ENCODE measurements at regions of chr11 and their contacts with region 1.

Region 1: GRCh38 chr11:10899121-10899830 is 41.4 kb upstream of the ZBED5 start:
- DNase-seq: no peak
- ATAC-seq: peak; percentile 20; the same call in 1 of the 2 replicates
- H3K4me3 ChIP-seq: peak overlapping the region; percentile 18
- H3K27ac ChIP-seq: peak overlapping the region; percentile 99
- H3K4me1 ChIP-seq: peaks cover 45% of the 10 kb centered on the region
- H3K27me3 ChIP-seq: no peaks in the 10 kb centered on the region
- CTCF ChIP-seq: no peak

Region 2: DNA sequence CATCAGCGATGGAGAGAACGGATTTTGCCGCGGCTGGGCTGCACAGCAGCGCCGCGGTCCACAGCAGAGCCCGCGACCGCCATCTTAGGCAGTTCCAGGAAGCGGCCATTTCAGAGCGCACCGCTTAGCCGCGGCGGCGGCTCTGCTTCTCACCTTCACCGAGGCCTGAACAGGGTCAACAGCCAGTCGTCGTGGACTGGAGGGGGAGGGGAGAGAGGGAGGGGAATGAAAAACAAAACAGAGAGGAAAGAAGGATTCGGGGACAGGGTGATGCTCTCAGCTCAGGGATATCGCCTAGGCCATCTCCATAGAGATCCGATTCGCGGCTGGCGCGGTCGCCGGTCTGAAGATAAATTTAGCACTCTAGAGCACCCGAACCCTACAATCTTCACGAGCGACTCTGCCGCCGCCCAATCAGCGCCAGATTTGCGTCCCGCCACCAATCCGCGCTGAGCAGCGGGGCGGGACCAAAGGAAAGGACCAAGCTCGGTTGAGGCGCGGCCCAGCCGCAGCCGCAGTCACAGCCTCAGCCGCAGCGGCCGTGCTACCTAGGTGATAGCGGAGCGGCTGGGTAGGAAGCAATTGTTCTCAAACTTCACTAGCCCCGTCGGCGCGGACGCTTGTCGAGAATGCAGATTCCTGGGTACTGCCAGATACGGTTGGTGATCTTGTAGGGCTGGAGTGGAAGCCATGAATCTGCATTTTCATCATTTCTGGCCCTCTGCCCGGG is 41.4 kb before region 1 on chr11 and contains the start of gene ZBED5:
- CTCF ChIA-PET with region 1: interaction called, 3 read pairs
- POLR2A ChIA-PET with region 1: interaction called, 11 read pairs
- intact Hi-C with region 1: loop called (anchors 1 kb)
- DNase-seq: peak; percentile 97
- ATAC-seq: peak; percentile 93
- H3K4me3 ChIP-seq: peak within 1 kb of the TSS; percentile 76
- H3K27ac ChIP-seq: peak within 1 kb of the TSS; percentile 91
- H3K4me1 ChIP-seq: peaks cover 38% of the 10 kb centered on the region
- H3K27me3 ChIP-seq: no peaks in the 10 kb centered on the region
- CTCF ChIP-seq: no peak; the same call in 1 of the 2 replicates
- total RNA-seq, gene ZBED5: 19.5 and 21.0 TPM in 2 replicates

Region 3: DNA sequence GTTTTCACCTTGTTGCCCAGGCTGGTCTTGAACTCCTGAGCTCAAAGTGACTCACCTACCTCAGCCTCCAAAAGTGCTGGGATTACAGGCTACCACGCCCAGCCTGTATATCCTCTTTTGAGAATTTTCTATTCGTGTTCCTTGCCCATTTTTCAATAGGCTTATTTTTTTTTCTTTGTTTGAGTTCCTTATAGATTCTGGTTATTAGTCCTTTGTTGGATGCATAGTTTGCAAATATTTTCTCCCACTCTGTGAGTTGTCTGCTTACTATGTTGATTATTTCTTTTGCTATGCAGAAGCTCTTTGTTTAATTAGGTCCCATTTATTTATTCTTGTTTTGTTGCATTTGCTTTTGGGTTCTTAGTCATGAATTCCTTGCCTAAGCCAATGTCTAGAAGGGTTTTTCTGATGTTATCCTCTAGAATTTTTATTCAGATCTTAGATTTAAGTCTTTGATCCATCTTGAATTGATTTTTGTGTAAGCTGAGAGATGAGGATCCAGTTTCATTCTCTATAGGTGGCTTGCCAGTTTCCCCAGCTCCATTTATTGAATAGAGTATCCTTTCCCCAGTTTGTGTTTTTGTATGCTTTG is 23.8 kb before region 1 on chr11:
- CTCF ChIA-PET with region 1: interaction called, 3 read pairs
- POLR2A ChIA-PET with region 1: interaction called, 3 read pairs
- intact Hi-C with region 1: loop called (anchors 1 kb)
- DNase-seq: peak; percentile 81
- ATAC-seq: peak; percentile 74
- H3K4me3 ChIP-seq: peak overlapping the region; percentile 51; the same call in 1 of the 2 replicates
- H3K27ac ChIP-seq: peak overlapping the region; percentile 98
- H3K4me1 ChIP-seq: peaks cover 42% of the 10 kb centered on the region
- H3K27me3 ChIP-seq: no peaks in the 10 kb centered on the region
- CTCF ChIP-seq: no peak

Region 4: GRCh38 chr11:10909141-10909883 is 10.0 kb after region 1 on chr11:
- CTCF ChIA-PET with region 1: no interaction called
- POLR2A ChIA-PET with region 1: no interaction called
- intact Hi-C with region 1: no loop called
- DNase-seq: peak; percentile 39
- ATAC-seq: peak; percentile 44
- H3K4me3 ChIP-seq: no peak overlapping the region
- H3K27ac ChIP-seq: no peak overlapping the region
- H3K4me1 ChIP-seq: peaks cover 31% of the 10 kb centered on the region
- H3K27me3 ChIP-seq: no peaks in the 10 kb centered on the region
- CTCF ChIP-seq: no peak

Region 5: GRCh38 chr11:10926801-10927211 is 27.5 kb after region 1 on chr11:
- CTCF ChIA-PET with region 1: interaction called, 4 read pairs
- POLR2A ChIA-PET with region 1: interaction called, 25 read pairs
- intact Hi-C with region 1: loop called (anchors 1 kb)
- DNase-seq: peak; percentile 90
- ATAC-seq: peak; percentile 17
- H3K4me3 ChIP-seq: no peak overlapping the region
- H3K27ac ChIP-seq: peak overlapping the region; percentile 92
- H3K4me1 ChIP-seq: peaks cover 60% of the 10 kb centered on the region
- H3K27me3 ChIP-seq: no peaks in the 10 kb centered on the region
- CTCF ChIP-seq: no peak

Region 6: DNA sequence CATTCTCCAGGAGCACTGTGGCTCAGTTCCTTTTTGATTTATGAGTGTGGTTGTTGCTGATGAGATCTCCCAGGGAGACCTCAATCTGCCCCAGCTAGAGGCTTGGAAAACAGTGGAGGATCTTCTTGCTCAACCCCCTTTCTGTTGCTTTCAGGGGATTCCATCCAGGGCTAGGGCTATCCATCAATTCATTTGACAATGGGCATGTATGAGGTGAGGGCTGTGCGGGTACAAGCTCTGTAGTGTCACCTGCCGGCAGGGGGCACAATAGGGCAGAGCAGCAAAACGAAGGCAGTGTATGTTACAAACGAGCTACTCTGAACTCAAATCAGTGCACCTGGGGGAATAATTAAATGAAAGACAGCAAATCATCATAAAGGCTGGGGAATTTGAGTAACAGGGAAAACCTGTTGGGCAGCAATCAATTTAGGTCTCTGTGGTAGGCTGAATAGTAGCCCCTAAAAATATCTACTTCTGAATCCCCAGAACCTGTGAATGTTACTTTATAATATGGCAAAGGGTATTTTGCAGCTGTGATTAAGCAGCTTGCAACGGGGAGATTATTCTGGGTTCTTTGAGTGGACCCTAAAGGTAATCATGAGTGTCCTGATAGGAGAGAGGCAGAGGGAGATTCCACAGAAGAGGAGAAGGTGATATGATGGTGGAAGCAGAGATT is 128.9 kb after region 1 on chr11:
- CTCF ChIA-PET with region 1: no interaction called
- POLR2A ChIA-PET with region 1: interaction called, 14 read pairs
- intact Hi-C with region 1: no loop called
- DNase-seq: peak; percentile 73
- ATAC-seq: peak; percentile 87
- H3K4me3 ChIP-seq: no peak overlapping the region
- H3K27ac ChIP-seq: no peak overlapping the region
- H3K4me1 ChIP-seq: peaks cover 17% of the 10 kb centered on the region
- H3K27me3 ChIP-seq: 0 out of 2 replicates have a peak, but pooled peaks cover 3% of the 10 kb centered on the region
- CTCF ChIP-seq: peak; percentile 93